AG04450 (cell line): ENCODE measurements at regions of chr19 and their contacts with region 1.

Region 1: GRCh38 chr19:42596391-42597072 is 1.8 kb upstream of the CEACAM8 start:
- DNase-seq: no peak
- H3K4me3 ChIP-seq: no peak overlapping the region
- H3K27ac ChIP-seq: no peak overlapping the region
- H3K27me3 ChIP-seq: peaks cover 4% of the 10 kb centered on the region
- CTCF ChIP-seq: peak; percentile 83

Region 2: DNA sequence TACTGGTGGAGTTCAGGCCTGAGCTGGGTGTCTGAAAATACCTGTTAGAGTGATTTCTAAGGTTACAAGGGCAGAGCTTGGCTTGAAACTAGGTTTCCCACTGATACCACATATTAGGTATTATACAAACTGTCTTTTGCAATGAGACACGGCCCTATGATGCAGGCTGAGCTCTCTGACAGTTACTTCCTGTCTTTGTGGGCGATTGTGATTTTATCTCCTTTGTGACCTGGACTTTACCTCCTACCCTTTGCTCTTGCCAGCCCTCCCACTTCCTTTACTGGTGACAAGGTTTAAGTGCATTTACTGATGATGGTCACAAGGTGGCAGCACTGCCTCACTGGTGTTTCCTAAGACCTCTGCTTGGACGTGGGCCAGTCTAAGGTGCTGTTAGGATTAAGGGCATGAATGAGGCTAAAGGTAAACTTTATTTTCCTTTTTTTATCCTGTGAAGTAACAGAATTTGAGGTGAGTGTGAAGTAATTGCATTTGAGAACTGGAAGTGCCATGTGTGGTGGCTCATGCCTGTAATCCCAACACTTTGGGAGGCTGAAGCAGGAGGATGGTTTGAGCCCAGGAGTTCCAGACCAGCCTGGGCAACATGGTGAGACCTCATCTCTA is 146.1 kb before region 1 on chr19:
- CTCF ChIA-PET with region 1: interaction called, 10 read pairs
- POLR2A ChIA-PET with region 1: no interaction called
- DNase-seq: peak; percentile 58
- H3K4me3 ChIP-seq: no peak overlapping the region
- H3K27ac ChIP-seq: no peak overlapping the region
- H3K27me3 ChIP-seq: peaks cover 17% of the 10 kb centered on the region
- CTCF ChIP-seq: peak; percentile 87

Region 3: GRCh38 chr19:42497492-42498168 is 98.9 kb before region 1 on chr19:
- CTCF ChIA-PET with region 1: no interaction called
- POLR2A ChIA-PET with region 1: no interaction called
- DNase-seq: no peak
- H3K4me3 ChIP-seq: no peak overlapping the region
- H3K27ac ChIP-seq: no peak overlapping the region
- H3K27me3 ChIP-seq: peaks cover 15% of the 10 kb centered on the region
- CTCF ChIP-seq: no peak

Region 4: DNA sequence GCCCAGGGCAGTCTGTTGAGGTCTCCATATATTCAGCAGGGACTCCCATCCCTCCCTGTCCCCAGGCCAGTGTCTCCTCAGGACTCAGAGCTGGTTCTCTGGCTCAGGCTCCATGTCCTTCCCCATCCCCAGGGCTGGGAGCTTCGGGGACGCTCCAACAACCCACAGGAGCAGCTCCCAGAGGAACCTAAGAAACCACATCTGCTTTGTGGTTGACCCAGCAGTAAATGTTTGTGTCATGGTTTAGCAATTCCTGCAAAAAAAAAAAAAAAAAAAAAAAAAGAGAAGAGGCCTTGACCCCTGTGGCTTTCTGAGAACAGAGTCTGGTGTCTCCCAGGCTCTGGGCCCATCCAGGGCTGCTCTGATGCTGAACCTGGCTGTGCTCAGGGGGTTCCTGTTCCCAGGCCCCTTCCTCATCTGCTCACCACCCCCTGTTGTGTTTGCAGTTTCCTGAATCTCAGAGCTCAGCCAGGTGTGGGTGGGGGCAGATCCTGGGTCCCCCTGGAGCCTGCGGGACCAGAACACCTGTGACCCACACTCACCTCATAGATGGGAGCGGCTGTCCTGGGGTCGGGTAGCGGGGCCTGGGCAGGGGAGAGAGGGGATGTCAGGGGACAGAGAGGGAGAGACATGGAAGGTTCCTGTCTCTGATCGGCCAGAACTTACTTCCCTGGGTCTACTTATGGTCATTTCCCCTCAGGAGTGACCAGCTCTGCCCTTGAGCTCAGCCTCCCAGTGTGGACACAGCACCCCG is 43.1 kb before region 1 on chr19:
- CTCF ChIA-PET with region 1: no interaction called
- POLR2A ChIA-PET with region 1: no interaction called
- DNase-seq: peak; percentile 27
- H3K4me3 ChIP-seq: no peak overlapping the region
- H3K27ac ChIP-seq: no peak overlapping the region
- H3K27me3 ChIP-seq: peaks cover 17% of the 10 kb centered on the region
- CTCF ChIP-seq: no peak

Region 5: DNA sequence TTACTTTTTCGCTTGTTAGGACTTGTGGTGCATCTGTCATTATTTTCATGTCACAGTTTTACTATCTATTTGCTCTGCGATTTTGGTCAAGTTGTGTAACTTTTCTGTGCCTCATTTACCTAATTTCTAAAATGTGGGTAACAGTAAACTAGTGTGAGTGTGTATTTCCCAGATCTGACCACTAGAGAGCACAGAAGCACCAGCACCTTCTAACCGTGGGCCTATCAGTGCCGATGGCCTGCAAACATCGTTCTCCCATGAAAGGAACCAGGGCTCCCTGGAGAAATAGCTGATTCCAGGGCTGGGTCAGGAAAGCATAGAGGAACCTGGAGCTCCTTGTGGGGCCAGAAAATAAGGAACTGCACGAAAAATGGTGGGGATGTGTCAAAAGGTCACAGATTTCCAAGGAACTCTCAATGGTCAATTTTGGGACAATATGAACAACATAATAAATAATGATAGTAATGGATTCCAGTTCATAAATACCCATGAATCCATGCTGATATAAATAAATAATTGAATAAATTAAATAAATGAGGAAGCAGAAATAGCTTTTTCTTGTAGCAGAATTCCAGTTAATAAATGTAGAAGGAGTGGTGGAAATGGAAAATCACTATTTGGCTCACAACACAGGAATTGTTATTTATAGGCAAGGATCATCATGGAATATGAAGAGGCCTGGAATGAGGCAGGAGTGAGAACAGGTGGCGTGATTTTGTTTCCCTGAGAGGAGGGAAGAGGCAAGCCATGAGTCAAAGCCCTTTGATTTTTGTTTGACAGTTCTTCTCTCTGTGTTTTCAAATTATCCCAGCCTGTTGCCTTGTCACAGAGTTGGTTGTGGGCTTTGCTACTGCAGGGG is 33.0 kb before region 1 on chr19:
- CTCF ChIA-PET with region 1: interaction called, 11 read pairs
- POLR2A ChIA-PET with region 1: no interaction called
- DNase-seq: no peak
- H3K4me3 ChIP-seq: no peak overlapping the region
- H3K27ac ChIP-seq: no peak overlapping the region
- H3K27me3 ChIP-seq: peaks cover 17% of the 10 kb centered on the region
- CTCF ChIP-seq: peak; percentile 76

Region 6: GRCh38 chr19:42606660-42607351 is 10.3 kb after region 1 on chr19:
- CTCF ChIA-PET with region 1: interaction called, 12 read pairs
- POLR2A ChIA-PET with region 1: no interaction called
- DNase-seq: no peak
- H3K4me3 ChIP-seq: no peak overlapping the region
- H3K27ac ChIP-seq: no peak overlapping the region
- H3K27me3 ChIP-seq: peaks cover 6% of the 10 kb centered on the region
- CTCF ChIP-seq: peak; percentile 70